OCI-LY7 (cell line): ENCODE measurements at regions of chr13 and their contacts with region 1.

Region 1: GRCh38 chr13:62209529-62209928 is 793.9 kb upstream of the PCDH20 start:
- DNase-seq: peak; percentile 94
- H3K4me3 ChIP-seq: peak overlapping the region; percentile 52
- H3K27ac ChIP-seq: peak overlapping the region; percentile 95
- H3K4me1 ChIP-seq: peaks cover 45% of the 10 kb centered on the region
- CTCF ChIP-seq: no peak

Region 2: DNA sequence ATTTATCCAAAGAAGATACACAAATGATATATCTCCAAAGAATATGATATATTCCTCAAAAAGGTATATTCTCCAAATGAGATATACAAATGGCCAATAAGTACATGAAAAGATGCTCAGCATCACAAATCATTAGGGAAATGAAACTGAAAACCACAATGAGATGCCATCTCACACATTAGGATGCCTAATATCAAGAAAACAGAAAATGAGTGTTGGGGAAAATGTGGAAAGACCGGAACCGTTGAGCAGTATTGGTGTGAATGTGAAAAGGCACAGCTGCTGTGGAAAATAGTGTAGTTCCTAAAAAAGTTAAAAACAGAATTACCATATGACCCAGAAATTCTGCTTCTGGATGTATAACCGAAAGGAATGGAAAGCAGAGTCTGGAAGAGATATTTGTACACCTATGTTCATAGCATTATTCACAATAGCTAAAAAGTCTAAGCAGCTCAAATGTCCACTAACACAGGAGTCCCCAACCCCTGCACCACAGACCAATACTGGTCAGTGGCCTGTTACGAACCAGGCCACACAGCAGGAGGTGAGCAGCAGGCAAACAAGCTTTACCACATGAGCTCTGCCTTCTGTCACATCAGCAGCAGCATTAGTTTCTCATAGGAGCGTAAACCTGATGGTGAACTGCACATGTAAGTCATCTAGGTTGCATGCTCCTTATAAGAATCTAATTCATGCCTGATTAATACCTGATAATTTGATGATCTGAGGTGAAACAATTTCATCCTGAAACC is 1085.8 kb before region 1 on chr13:
- CTCF ChIA-PET with region 1: no interaction called
- POLR2A ChIA-PET with region 1: no interaction called
- intact Hi-C with region 1: no loop called
- DNase-seq: no peak
- H3K4me3 ChIP-seq: no peak overlapping the region
- H3K27ac ChIP-seq: no peak overlapping the region
- H3K4me1 ChIP-seq: no peaks in the 10 kb centered on the region
- CTCF ChIP-seq: no peak

Region 3: DNA sequence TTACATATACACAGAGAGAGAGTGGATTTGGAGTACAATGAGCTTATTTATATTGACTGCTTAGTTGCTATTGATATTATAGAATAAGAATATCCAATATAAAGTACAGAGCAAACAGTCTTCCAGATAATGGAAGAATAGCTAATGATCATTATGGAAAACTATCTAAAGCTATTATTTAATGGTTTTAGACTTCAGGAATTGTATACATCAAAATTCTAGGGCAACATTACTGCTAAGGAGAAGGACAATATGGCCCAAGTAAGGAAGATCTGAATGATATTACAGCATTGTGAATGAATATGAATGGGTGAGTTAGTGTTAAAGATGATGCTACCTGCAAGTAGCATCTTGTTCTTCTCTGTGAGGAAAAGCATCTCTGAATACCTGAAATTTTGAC is 189.7 kb before region 1 on chr13:
- CTCF ChIA-PET with region 1: no interaction called
- POLR2A ChIA-PET with region 1: no interaction called
- intact Hi-C with region 1: no loop called
- DNase-seq: no peak
- H3K4me3 ChIP-seq: no peak overlapping the region
- H3K27ac ChIP-seq: no peak overlapping the region
- H3K4me1 ChIP-seq: no peaks in the 10 kb centered on the region
- CTCF ChIP-seq: no peak

Region 4: GRCh38 chr13:62119739-62120700 is 89.5 kb before region 1 on chr13:
- CTCF ChIA-PET with region 1: no interaction called
- POLR2A ChIA-PET with region 1: interaction called, 5 read pairs
- intact Hi-C with region 1: loop called (anchors 1 kb)
- DNase-seq: peak; percentile 63
- H3K4me3 ChIP-seq: no peak overlapping the region
- H3K27ac ChIP-seq: no peak overlapping the region
- H3K4me1 ChIP-seq: peaks cover 11% of the 10 kb centered on the region
- CTCF ChIP-seq: peak; percentile 90

Region 5: DNA sequence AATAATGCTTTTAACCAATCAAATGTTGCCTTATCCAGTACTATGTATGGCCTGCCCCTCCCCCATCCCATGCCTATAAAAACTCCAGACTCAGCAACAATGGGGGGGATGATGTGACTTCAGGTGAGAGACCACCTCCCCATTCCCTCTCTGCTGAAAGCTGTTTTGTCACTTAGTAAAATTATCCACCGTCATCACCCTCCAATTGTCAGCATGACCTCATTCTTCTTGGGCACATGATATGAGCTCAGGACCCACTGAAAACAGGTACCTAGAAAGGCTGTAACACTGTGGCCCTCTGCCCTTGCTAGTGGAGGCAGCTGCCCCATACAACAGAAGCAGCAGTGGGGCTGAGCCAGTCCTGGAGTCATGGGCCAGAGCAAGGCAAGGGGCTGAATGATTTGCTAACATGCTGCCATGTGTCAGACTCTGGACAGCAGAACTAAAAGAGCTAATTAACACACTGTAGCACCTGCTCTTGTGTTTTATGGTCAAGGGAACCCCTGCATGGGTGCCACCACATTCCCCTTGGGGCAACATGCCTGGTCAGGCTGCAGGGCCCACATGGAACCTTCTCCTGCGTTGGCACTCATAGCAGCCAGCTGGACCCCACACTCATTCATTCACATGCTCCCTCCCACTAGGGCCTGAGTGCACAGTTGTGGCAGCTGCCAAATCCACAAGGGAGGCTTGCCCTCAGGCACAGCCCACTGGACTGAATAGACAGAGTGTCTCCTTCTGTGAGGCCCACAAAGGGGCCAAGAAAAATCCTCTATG is 71.7 kb before region 1 on chr13:
- CTCF ChIA-PET with region 1: no interaction called
- POLR2A ChIA-PET with region 1: interaction called, 7 read pairs
- intact Hi-C with region 1: loop called (anchors 5 kb)
- DNase-seq: no peak
- H3K4me3 ChIP-seq: no peak overlapping the region
- H3K27ac ChIP-seq: no peak overlapping the region
- H3K4me1 ChIP-seq: no peaks in the 10 kb centered on the region
- CTCF ChIP-seq: no peak

Region 6: DNA sequence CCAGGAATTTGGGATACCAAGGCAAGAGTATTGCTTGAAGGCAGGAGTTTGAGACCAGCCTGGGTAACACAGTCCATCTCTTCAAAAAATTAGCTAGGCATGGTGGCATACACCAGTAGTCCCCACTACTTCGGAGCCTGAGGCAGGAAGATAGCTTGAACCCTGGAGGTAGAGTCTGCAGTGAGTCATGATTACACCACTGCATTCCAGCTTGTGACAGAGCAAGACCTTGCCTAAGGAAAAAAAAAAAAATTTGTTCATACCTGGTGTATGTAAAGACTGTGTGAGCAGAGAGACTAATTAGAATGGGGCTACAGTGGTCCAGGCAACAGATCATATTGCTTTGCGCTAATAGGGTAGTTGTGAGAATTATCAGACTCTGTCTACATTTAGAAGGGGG is 15.6 kb before region 1 on chr13:
- CTCF ChIA-PET with region 1: no interaction called
- POLR2A ChIA-PET with region 1: interaction called, 31 read pairs
- intact Hi-C with region 1: no loop called
- DNase-seq: no peak
- H3K4me3 ChIP-seq: no peak overlapping the region
- H3K27ac ChIP-seq: no peak overlapping the region
- H3K4me1 ChIP-seq: no peaks in the 10 kb centered on the region
- CTCF ChIP-seq: no peak

Region 7: GRCh38 chr13:62234780-62235440 is 25.4 kb after region 1 on chr13:
- CTCF ChIA-PET with region 1: no interaction called
- POLR2A ChIA-PET with region 1: interaction called, 12 read pairs
- intact Hi-C with region 1: no loop called
- DNase-seq: no peak
- H3K4me3 ChIP-seq: no peak overlapping the region
- H3K27ac ChIP-seq: no peak overlapping the region
- H3K4me1 ChIP-seq: peaks cover 5% of the 10 kb centered on the region
- CTCF ChIP-seq: no peak

Region 8: GRCh38 chr13:62305756-62306155 is 96.2 kb after region 1 on chr13:
- CTCF ChIA-PET with region 1: no interaction called
- POLR2A ChIA-PET with region 1: interaction called, 8 read pairs
- intact Hi-C with region 1: loop called (anchors 1 kb)
- DNase-seq: peak; percentile 58
- H3K4me3 ChIP-seq: peak overlapping the region; percentile 60
- H3K27ac ChIP-seq: peak overlapping the region; percentile 63
- H3K4me1 ChIP-seq: peaks cover 23% of the 10 kb centered on the region
- CTCF ChIP-seq: no peak

Region 9: DNA sequence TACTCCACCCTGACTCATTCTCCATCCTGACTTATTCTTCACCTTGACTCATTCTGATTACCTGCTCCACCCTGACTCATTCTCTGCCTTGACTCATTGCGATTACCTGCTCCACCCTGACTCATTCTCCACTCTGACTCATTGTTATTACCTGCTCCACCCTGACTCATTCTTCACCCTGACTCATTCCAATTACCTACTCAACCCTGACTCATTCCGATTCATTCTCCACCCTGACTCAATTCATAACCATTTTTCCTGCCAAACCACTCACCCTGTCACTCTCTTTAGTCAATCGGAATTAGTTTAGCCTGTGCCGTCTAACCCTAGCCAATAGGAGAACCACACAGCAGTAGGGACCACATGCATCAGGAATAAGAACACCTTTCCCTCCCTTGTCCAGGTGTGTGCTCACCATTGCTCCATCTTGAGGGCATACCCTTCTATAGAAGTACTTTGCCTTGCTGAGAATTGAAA is 433.5 kb after region 1 on chr13:
- CTCF ChIA-PET with region 1: no interaction called
- POLR2A ChIA-PET with region 1: no interaction called
- intact Hi-C with region 1: loop called (anchors 5 kb)
- DNase-seq: no peak
- H3K4me3 ChIP-seq: peak overlapping the region; percentile 55
- H3K27ac ChIP-seq: peak overlapping the region; percentile 93
- H3K4me1 ChIP-seq: peaks cover 41% of the 10 kb centered on the region
- CTCF ChIP-seq: no peak

Region 10: DNA sequence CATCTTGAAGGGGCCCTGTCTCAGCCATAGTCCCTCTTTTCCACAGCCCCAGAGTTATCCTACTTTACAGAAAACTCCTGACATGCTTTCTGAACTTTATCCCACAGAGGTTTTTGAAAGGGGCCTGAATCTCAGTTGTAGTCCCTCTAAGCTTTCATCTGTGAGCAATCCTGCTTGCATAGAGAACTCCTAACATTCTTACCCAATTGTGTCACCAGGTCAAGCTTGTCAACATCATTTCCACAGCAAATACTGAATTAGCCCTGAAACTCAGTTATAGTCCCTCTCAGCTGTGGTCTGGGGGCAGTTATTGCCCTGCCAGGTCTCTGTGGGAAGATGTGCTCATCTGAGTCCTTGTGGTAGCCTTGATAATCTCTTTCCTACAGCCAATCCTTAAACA is 1396.4 kb after region 1 on chr13:
- CTCF ChIA-PET with region 1: no interaction called
- POLR2A ChIA-PET with region 1: no interaction called
- intact Hi-C with region 1: no loop called
- DNase-seq: no peak
- H3K4me3 ChIP-seq: no peak overlapping the region
- H3K27ac ChIP-seq: no peak overlapping the region
- H3K4me1 ChIP-seq: no peaks in the 10 kb centered on the region
- CTCF ChIP-seq: no peak